ENCODE measurements at regions of chr7 and their contacts with region 1.

Region 1: GRCh38 chr7:71733107-71733870 is 601.3 kb downstream of the GALNT17 start:
- DNase-seq: peak; percentile 62 to 85
- H3K4me3 ChIP-seq: peak overlapping the region; percentile 17 to 49
- H3K27ac ChIP-seq: no peak overlapping the region
- H3K4me1 ChIP-seq: peaks cover 0 to 7% (median 4%) of the 10 kb centered on the region in 4 donors
- H3K27me3 ChIP-seq: no peaks in the 10 kb centered on the region
- CTCF ChIP-seq: peak; percentile 90 to 94

Region 2: GRCh38 chr7:70856866-70857630 is 876.2 kb before region 1 on chr7:
- intact Hi-C with region 1: loop called (anchors 2 kb)
- DNase-seq: peak; percentile 47 to 72
- H3K4me3 ChIP-seq: no peak overlapping the region
- H3K27ac ChIP-seq: no peak overlapping the region
- H3K4me1 ChIP-seq: no peaks in the 10 kb centered on the region
- H3K27me3 ChIP-seq: no peaks in the 10 kb centered on the region
- CTCF ChIP-seq: peak; percentile 87 to 89

Region 3: GRCh38 chr7:71131256-71132126 is 601.8 kb before region 1 on chr7:
- intact Hi-C with region 1: loop called (anchors 5 kb)
- DNase-seq: peak; percentile 27 to 80
- H3K4me3 ChIP-seq: peak overlapping the region; percentile 69 to 84
- H3K27ac ChIP-seq: peak overlapping the region; percentile 83 to 86
- H3K4me1 ChIP-seq: peaks cover 0 to 54% (median 27%) of the 10 kb centered on the region in 4 donors
- H3K27me3 ChIP-seq: no peaks in the 10 kb centered on the region
- CTCF ChIP-seq: peak in 1 of 2 experiments; percentile 22

Region 4: DNA sequence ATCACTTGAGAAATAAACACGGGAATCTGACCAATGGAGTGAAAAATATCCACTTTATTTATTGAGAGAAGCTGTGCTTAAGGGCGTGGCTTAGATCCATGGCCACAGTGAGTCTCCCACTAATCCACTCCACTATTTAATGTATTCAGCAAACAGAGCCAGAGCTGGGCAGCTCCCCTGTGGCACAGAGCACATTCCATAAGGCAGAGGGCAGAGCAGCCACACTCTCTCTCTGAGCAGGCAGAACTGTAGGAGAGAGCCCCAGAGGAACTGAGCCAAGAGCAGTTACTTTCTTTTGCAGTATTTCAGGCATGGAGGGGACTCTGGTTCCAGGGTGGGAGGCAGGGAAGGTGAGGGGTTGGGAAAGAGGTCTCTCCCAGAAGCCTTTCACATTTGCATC is 495.3 kb before region 1 on chr7:
- intact Hi-C with region 1: loop called (anchors 10 kb)
- DNase-seq: peak; percentile 34 to 78
- H3K4me3 ChIP-seq: no peak overlapping the region
- H3K27ac ChIP-seq: peak overlapping the region; percentile 83 to 87
- H3K4me1 ChIP-seq: peaks cover 0 to 68% (median 34%) of the 10 kb centered on the region in 4 donors
- H3K27me3 ChIP-seq: no peaks in the 10 kb centered on the region
- CTCF ChIP-seq: peak; percentile 26 to 56

Measured in tibial artery (tissue), 4 donors.